Caco-2 (cell line): ENCODE measurements at regions of chr10 and their contacts with region 1.

Region 1: GRCh38 chr10:94279835-94280709 is 82.7 kb downstream of the NOC3L start:
- DNase-seq: peak; percentile 56 to 79
- H3K4me3 ChIP-seq: no peak overlapping the region
- H3K4me3 Mint-ChIP-seq: no peak overlapping the region
- H3K27ac Mint-ChIP-seq: no peak overlapping the region
- H3K4me1 ChIP-seq: no peaks in the 10 kb centered on the region
- H3K4me1 Mint-ChIP-seq: peaks cover 9% of the 10 kb centered on the region
- H3K27me3 ChIP-seq: no peaks in the 10 kb centered on the region
- H3K27me3 Mint-ChIP-seq: no peaks in the 10 kb centered on the region
- CTCF ChIP-seq: peak; percentile 93 to 95

Region 2: GRCh38 chr10:94315024-94315451 is 35.0 kb after region 1 on chr10:
- CTCF ChIA-PET with region 1: interaction called, 3 read pairs
- POLR2A ChIA-PET with region 1: no interaction called
- intact Hi-C with region 1: loop called (anchors 1 kb)
- DNase-seq: peak; percentile 49
- H3K4me3 ChIP-seq: no peak overlapping the region
- H3K4me3 Mint-ChIP-seq: no peak overlapping the region
- H3K27ac Mint-ChIP-seq: peak overlapping the region; percentile 55
- H3K4me1 ChIP-seq: peaks cover 38% of the 10 kb centered on the region
- H3K4me1 Mint-ChIP-seq: peaks cover 5% of the 10 kb centered on the region
- H3K27me3 ChIP-seq: no peaks in the 10 kb centered on the region
- H3K27me3 Mint-ChIP-seq: no peaks in the 10 kb centered on the region
- CTCF ChIP-seq: peak in 1 of 2 experiments; percentile 0

Region 3: DNA sequence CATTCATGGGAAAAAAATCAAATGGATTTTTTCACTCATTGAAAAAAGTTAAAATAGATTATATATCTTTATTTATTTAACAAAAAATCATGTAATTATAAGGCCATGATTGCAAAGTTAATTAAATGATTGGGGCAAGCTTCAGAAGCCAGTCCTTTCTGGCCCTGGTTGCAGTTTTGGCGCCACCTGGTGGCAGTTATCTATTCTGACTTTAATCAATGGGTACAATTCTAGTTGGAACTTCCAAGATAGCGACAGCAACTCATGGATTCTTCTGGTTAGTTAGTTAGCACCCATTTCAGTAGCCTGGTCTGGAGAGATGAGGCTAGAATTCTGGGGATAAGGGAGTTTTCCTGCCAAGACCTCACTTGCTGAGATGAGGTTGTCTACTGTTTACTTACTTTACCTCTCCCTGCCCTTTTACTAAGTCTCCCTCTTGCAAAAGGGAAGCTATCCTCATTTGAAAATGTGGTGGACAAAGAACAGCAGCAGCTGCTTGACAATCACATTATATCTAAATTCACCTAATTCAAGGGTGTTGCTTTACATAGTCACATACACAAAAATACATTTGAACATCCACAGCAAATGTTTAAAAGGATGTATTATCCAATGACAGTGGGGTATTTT is 40.3 kb after region 1 on chr10:
- CTCF ChIA-PET with region 1: interaction called, 3 read pairs
- POLR2A ChIA-PET with region 1: no interaction called
- intact Hi-C with region 1: loop called (anchors 1 kb)
- DNase-seq: peak; percentile 58 to 77
- H3K4me3 ChIP-seq: no peak overlapping the region
- H3K4me3 Mint-ChIP-seq: no peak overlapping the region
- H3K27ac Mint-ChIP-seq: no peak overlapping the region
- H3K4me1 ChIP-seq: peaks cover 15% of the 10 kb centered on the region
- H3K4me1 Mint-ChIP-seq: no peaks in the 10 kb centered on the region
- H3K27me3 ChIP-seq: no peaks in the 10 kb centered on the region
- H3K27me3 Mint-ChIP-seq: no peaks in the 10 kb centered on the region
- CTCF ChIP-seq: peak; percentile 82 to 85